ENCODE measurements at regions of chr5 and their contacts with region 1.

Region 1: DNA sequence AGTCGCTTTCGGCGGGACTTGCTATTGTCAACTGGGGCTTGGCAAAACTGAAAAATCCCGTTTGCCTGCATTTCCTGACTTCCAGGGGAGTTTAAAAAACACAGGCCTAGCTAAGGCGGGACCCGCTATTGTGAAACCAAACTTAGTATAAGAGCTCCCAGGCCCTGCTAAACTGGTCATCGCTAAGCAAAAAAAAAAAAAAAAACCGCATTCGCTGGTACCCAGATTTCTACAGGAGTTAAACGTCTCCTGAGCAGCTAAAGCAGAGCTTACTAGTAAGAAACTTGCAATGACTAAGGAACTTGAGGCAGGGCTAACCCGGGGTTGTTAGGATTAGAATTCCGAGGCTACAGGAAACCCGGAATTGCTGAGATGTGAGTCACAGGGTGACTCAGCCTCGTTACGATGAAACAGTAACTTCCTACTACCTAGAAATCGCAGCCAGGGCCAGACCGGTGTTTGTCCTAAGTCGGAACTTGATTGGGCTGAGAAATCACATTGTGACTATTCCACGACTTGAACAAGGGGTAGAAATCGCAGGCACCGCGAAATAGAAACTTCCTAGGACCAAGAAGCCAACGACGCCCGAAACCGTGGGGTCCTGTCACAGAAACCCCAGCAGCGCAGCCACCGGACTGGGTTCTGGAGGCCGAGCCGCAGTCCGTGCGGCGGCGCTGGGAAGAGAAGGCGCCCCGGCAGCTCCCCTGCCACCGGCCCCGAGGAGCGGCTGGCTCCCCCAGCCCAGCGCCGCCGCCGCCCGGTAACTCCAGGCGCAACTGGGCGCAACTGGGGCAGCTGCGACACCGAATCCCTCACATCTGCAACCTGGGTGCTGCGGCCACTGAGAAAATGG is 89.5 kb downstream of the ANXA2R start:
- DNase-seq: peak; percentile 70
- H3K4me3 Mint-ChIP-seq: peak overlapping the region; percentile 96
- H3K27ac Mint-ChIP-seq: peak overlapping the region; percentile 100
- H3K4me1 Mint-ChIP-seq: peaks cover 47% of the 10 kb centered on the region
- H3K27me3 Mint-ChIP-seq: peaks cover 9% of the 10 kb centered on the region

Region 2: GRCh38 chr5:42908509-42909488 is 41.9 kb before region 1 on chr5:
- CTCF ChIA-PET with region 1: interaction called, 33 read pairs
- DNase-seq: peak; percentile 94
- H3K4me3 Mint-ChIP-seq: peak overlapping the region; percentile 81
- H3K27ac Mint-ChIP-seq: peak overlapping the region; percentile 46
- H3K4me1 Mint-ChIP-seq: peaks cover 21% of the 10 kb centered on the region
- H3K27me3 Mint-ChIP-seq: peaks cover 45% of the 10 kb centered on the region

Region 3: GRCh38 chr5:42994246-42995151 is 43.8 kb after region 1 on chr5:
- CTCF ChIA-PET with region 1: interaction called, 63 read pairs
- DNase-seq: peak; percentile 91
- H3K4me3 Mint-ChIP-seq: peak overlapping the region; percentile 97
- H3K27ac Mint-ChIP-seq: peak overlapping the region; percentile 99
- H3K4me1 Mint-ChIP-seq: peaks cover 27% of the 10 kb centered on the region
- H3K27me3 Mint-ChIP-seq: peaks cover 9% of the 10 kb centered on the region

Region 4: DNA sequence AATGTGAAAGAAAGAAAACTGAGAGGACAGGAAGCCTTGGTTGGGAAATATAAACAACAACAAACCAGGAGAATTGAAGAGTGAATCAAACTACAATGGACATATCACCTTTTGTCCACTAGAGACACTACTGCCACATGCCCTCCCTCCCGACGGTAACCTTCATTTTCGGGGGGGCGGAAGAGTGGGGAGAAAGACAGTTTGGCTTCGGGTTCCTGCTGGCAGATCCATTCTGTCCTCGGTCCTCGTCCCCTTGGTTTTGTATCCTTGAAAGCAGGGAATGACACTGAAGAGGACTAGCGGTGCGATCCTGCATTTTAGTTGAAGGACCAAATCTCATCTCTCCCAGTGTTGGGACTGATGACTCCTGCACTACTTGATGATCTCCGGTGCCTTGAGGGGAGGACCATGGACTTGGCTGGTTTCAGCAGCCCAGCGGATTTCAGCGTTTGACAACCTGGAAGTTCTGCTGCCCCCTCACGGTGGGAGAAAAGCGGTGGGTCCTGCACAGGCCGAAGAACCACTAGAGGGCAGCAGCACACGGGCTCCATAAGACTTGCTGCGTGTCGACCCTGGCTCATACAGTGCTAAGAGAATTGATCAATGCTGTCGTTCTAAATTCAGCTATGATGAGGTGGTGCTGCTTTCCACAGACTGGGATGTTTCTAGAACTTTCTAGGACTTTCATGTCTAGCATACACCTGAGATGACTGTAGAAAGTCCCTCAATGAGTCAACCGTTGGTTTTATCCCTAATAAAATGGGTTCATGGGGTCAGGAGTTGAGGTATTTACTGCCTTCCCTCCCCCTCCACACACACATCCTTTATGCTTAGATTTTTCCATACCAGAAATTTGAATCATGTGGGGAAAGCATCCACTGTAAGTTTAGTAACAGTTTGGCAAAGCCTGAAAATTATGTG is 155.0 kb after region 1 on chr5:
- CTCF ChIA-PET with region 1: no interaction called
- DNase-seq: peak; percentile 92
- H3K4me3 Mint-ChIP-seq: peak overlapping the region; percentile 62
- H3K27ac Mint-ChIP-seq: peak overlapping the region; percentile 80
- H3K4me1 Mint-ChIP-seq: peaks cover 45% of the 10 kb centered on the region
- H3K27me3 Mint-ChIP-seq: no peaks in the 10 kb centered on the region